ENCODE measurements at regions of chr6 and their contacts with region 1.

Region 1: GRCh38 chr6:157520596-157521361 is 139.8 kb downstream of the ZDHHC14 start:
- DNase-seq: no peak
- ATAC-seq: no peak
- H3K4me3 Mint-ChIP-seq: no peak overlapping the region
- H3K27ac Mint-ChIP-seq: peak overlapping the region; percentile 86; the same call in 1 of the 2 replicates
- H3K4me1 Mint-ChIP-seq: peaks cover 43% of the 10 kb centered on the region
- H3K27me3 Mint-ChIP-seq: no peaks in the 10 kb centered on the region
- CTCF ChIP-seq: no peak

Region 2: DNA sequence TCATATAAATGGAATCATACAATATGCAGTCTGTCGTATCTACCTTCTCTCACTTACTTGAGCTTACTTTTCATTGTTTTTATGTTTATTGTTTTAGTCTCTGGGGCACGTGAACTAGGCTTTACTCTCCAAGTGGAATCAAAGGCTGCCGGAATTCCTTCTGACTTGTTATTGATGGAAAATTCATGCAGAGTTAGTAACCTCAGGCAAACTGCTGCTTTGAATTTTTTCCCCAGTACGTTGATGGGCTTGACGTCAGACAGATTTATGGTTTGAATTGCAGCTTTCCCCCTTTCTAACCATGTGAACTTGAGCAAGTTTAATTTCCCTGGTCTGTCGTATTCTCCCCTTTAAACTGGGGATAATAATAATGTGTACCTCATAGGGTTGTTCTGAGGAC is 71.2 kb before region 1 on chr6:
- CTCF ChIA-PET with region 1: no interaction called
- POLR2A ChIA-PET with region 1: no interaction called
- DNase-seq: no peak
- ATAC-seq: no peak
- H3K4me3 Mint-ChIP-seq: no peak overlapping the region
- H3K27ac Mint-ChIP-seq: peak overlapping the region; percentile 43; the same call in 1 of the 2 replicates
- H3K4me1 Mint-ChIP-seq: peaks cover 6% of the 10 kb centered on the region
- H3K27me3 Mint-ChIP-seq: no peaks in the 10 kb centered on the region
- CTCF ChIP-seq: no peak

Region 3: GRCh38 chr6:157823001-157823527 is 302.3 kb after region 1 on chr6 and contains the start of gene SNX9:
- CTCF ChIA-PET with region 1: no interaction called
- POLR2A ChIA-PET with region 1: interaction called, 12 read pairs
- DNase-seq: peak; percentile 76
- ATAC-seq: peak; percentile 78
- H3K4me3 Mint-ChIP-seq: peak within 1 kb of the TSS; percentile 96
- H3K27ac Mint-ChIP-seq: peak within 1 kb of the TSS; percentile 98
- H3K4me1 Mint-ChIP-seq: peaks cover 45% of the 10 kb centered on the region
- H3K27me3 Mint-ChIP-seq: peaks cover 4% of the 10 kb centered on the region; the same call in 1 of the 2 replicates
- CTCF ChIP-seq: no peak
- total RNA-seq, gene SNX9: 28.0 to 35.0 TPM (median 29.1 TPM) in 3 replicates

Measured in WTC11 (cell line).